ENCODE measurements at regions of chr16 and their contacts with region 1.

Region 1: DNA sequence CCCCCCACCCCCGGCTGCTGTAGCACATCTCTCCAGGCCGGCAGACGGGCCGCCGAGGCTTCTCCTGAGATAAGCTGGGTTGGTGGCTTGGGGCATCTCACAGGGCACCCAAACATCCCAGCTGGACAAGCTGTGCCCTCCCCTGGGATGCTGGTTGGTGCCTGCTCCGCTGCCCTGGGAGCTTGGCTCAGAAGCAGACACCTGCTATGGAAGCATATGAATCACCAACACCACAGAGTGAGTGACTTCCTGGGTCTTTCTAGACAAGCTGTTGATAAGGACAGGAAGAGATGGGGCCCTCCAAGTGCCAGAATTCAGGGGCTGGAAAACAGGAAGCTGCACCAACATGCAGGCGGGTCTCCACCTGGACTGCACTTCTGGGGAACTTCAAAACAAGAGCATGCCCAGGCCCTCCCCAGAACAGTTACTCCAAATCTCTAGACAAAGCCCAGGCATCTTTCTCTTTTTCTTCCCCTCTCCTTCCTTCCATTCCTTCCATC is 13.7 kb downstream of the C16orf95 start:
- DNase-seq: no peak
- ATAC-seq: peak in 2 of 4 experiments; percentile 43 to 51
- H3K4me3 ChIP-seq: no peak overlapping the region
- H3K4me3 Mint-ChIP-seq: no peak overlapping the region
- H3K27ac ChIP-seq: no peak overlapping the region
- H3K27ac Mint-ChIP-seq: peak overlapping the region in 1 of 2 donors; percentile 55
- H3K4me1 ChIP-seq: peaks cover 5% of the 10 kb centered on the region in 2 experiments
- H3K4me1 Mint-ChIP-seq: peaks cover 4 to 13% (median 5%) of the 10 kb centered on the region in 3 donors
- H3K27me3 ChIP-seq: no peaks in the 10 kb centered on the region
- H3K27me3 Mint-ChIP-seq: no peaks in the 10 kb centered on the region

Region 2: DNA sequence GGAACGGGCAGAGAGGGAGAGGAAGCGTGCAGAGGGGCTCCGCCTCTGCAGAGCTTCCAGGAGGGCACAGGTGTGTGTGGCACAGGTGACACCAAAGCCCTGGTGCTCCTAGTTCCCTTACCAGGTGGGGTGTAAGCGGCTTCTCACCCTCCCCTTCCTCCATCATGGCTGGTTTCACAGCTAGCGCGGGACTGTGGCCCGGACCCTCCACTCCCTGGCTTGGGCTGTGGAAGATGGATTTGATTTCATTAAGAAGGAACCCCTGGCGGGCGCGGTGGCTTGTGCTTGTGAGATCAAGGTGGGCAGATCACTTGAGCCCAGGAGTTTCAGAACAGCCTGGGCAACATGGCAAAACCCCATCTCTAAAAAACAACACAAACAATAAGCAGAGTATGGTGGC is 1931.5 kb before region 1 on chr16:
- CTCF ChIA-PET with region 1: interaction called in 1 of 2 experiments, 10 read pairs
- POLR2A ChIA-PET with region 1: no interaction called
- DNase-seq: no peak
- ATAC-seq: no peak
- H3K4me3 ChIP-seq: no peak overlapping the region
- H3K4me3 Mint-ChIP-seq: no peak overlapping the region
- H3K27ac ChIP-seq: no peak overlapping the region
- H3K27ac Mint-ChIP-seq: no peak overlapping the region
- H3K4me1 ChIP-seq: no peaks in the 10 kb centered on the region
- H3K4me1 Mint-ChIP-seq: no peaks in the 10 kb centered on the region
- H3K27me3 ChIP-seq: peaks cover 0 to 22% of the 10 kb centered on the region in 2 experiments
- H3K27me3 Mint-ChIP-seq: peaks cover 0 to 5% of the 10 kb centered on the region in 2 donors

Region 3: DNA sequence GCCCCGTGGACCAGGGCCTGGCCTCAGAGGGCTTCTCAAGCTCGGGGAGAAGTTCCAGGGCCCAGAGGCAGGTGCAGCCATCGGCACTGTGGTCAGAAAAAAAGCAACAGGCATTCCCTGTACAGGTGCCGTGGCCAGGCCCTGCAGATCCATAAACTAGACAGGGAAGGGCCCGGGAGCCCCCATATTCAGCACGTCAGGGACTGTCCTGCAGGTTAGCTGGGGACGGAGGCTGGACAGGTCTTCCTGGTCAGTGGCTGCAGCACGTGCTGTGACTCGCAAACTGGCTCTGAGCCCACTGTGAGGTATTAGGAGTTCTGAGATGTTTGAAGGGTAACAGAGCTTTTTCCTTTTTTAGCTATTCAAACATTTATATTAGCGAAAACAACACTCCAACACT is 28.7 kb after region 1 on chr16:
- CTCF ChIA-PET with region 1: no interaction called
- POLR2A ChIA-PET with region 1: no interaction called
- DNase-seq: no peak
- ATAC-seq: no peak
- H3K4me3 ChIP-seq: no peak overlapping the region
- H3K4me3 Mint-ChIP-seq: no peak overlapping the region
- H3K27ac ChIP-seq: no peak overlapping the region
- H3K27ac Mint-ChIP-seq: no peak overlapping the region
- H3K4me1 ChIP-seq: peaks cover 0 to 1% of the 10 kb centered on the region in 2 experiments
- H3K4me1 Mint-ChIP-seq: peaks cover under 1 to 10% (median 5%) of the 10 kb centered on the region in 3 donors
- H3K27me3 ChIP-seq: no peaks in the 10 kb centered on the region
- H3K27me3 Mint-ChIP-seq: no peaks in the 10 kb centered on the region

Measured in T-cell (primary cell).